ENCODE measurements at regions of chr10 and their contacts with region 1.

Region 1: DNA sequence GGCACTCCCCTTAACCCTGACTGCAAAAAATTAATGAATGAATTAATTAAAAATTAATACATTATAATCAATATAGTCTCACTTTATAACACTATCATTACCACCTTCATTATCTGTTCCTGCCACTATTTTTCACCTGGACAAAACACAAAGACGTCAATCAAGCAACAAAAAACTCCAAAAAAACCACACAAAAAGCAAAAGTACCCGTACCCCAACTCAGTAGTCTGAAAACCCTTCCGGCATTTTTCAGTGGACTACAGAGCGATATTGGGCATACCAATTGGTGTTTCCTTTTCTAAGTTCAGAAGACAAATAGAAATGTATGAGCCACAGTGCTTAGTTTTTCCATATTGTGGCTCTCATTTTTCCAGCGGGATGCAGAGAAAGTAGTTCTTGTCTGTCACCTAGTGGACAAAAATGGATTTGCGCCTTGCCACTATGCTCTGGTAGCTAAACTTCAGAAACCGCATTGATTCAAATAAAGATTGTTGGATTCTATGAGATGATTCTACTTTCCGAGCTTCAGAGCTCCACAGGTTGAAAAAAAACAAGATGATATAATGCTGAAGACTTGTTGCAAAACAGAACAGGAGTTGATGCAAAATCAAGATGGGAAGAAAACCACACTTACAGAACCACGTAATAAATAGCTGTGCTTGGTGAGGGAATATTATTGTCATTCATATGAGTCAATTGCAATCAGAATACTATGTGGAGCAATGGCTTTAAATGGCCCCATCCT is 50.6 kb upstream of the ITGB1 start:
- DNase-seq: no peak
- ATAC-seq: peak; percentile 44 to 53
- H3K4me3 ChIP-seq: no peak overlapping the region
- H3K27ac ChIP-seq: no peak overlapping the region
- H3K4me1 ChIP-seq: no peaks in the 10 kb centered on the region
- H3K27me3 ChIP-seq: no peaks in the 10 kb centered on the region

Region 2: GRCh38 chr10:32795598-32796183 is 213.0 kb before region 1 on chr10:
- intact Hi-C with region 1: loop called (anchors 1 to 5 kb)
- DNase-seq: no peak
- ATAC-seq: no peak
- H3K4me3 ChIP-seq: no peak overlapping the region
- H3K27ac ChIP-seq: no peak overlapping the region
- H3K4me1 ChIP-seq: no peaks in the 10 kb centered on the region
- H3K27me3 ChIP-seq: no peaks in the 10 kb centered on the region

Region 3: DNA sequence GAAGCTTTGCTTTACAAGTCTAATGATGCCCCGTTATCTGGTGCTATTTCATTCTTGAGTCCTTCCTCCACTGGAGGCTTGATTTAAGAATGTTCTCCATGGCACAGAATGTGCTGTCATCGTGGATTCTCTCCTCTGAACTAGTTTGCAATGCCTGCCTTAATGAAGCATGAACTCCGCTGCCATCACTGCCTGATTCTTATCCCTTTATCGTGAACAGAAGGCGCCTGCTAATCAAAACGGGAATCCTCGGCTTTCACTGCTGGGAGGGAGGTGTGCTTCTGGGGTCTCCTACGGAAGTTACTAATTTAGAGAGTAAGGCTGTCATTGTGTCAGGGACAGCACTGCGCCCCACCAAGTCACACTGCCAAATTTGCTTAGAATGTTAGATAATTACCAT is 106.9 kb before region 1 on chr10:
- intact Hi-C with region 1: loop called in 1 of 4 experiments (anchors 5 kb)
- DNase-seq: no peak
- ATAC-seq: no peak
- H3K4me3 ChIP-seq: no peak overlapping the region
- H3K27ac ChIP-seq: no peak overlapping the region
- H3K4me1 ChIP-seq: peaks cover 3% of the 10 kb centered on the region
- H3K27me3 ChIP-seq: no peaks in the 10 kb centered on the region

Region 4: DNA sequence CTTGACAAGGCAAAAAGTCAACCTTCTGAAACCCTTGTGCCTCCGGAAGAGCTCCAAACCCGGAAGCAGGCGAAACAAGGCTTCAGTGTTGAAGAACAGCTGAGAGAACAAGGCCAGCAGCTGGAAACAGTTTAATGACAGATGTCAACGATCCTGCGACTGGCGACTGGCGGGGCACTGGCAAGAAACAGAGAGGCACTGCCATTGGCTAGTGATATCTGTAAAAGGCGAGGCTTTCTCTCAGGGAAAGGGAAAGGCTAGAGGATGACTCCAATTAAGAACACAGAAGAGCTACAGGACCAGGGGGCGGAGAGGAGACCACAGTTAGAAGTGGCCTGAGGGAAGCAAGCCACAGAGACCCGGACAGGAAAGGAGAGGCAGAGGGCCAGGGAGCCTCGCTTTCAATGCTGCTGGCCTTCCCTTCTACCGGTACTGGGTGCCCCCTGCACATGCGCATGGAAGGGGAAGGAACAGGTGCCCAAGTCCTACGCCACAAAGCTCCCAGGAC is 70.1 kb before region 1 on chr10:
- intact Hi-C with region 1: loop called in 2 of 4 experiments (anchors 10 kb)
- DNase-seq: peak; percentile 53 to 78 (median 77)
- ATAC-seq: peak; percentile 73 to 75
- H3K4me3 ChIP-seq: no peak overlapping the region
- H3K27ac ChIP-seq: peak overlapping the region; percentile 90
- H3K4me1 ChIP-seq: peaks cover 22% of the 10 kb centered on the region
- H3K27me3 ChIP-seq: no peaks in the 10 kb centered on the region

Region 5: GRCh38 chr10:32943854-32944661 is 64.6 kb before region 1 on chr10:
- intact Hi-C with region 1: loop called in 2 of 4 experiments (anchors 10 kb)
- DNase-seq: peak in 2 of 3 donors; percentile 59 to 62
- ATAC-seq: peak; percentile 38 to 59
- H3K4me3 ChIP-seq: no peak overlapping the region
- H3K27ac ChIP-seq: no peak overlapping the region
- H3K4me1 ChIP-seq: peaks cover 30% of the 10 kb centered on the region
- H3K27me3 ChIP-seq: no peaks in the 10 kb centered on the region

Measured in right cardiac atrium (tissue), 5 donors.